ENCODE measurements at regions of chr17 and their contacts with region 1.

Region 1: GRCh38 chr17:40531051-40531991 is 29.9 kb upstream of the TNS4 start:
- DNase-seq: no peak
- ATAC-seq: no peak
- H3K4me3 ChIP-seq: no peak overlapping the region
- H3K27ac ChIP-seq: peak overlapping the region; percentile 21
- H3K4me1 ChIP-seq: peaks cover 37% of the 10 kb centered on the region
- H3K27me3 ChIP-seq: no peaks in the 10 kb centered on the region
- CTCF ChIP-seq: no peak
- POLR2A ChIP-seq: no peak
- RAD21 ChIP-seq: no peak

Region 2: DNA sequence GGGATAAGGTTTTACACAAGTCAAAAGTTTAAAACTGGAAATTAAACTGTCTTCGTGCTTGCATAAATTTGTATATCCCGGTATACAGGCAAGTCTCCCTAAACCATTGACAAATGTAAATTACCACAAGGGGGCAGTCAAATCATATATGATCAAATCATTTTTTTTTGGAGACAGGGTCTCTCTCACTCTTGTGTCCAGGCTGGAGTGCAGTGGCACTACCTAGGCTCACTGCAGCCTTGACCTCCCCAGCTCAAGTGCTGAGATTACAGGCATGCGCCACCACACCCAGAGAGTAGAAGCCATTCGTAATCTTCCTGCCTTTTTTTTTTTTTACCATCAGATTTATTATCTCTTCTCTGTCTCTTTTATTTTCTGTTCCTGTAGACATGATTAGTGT is 132.1 kb before region 1 on chr17:
- CTCF ChIA-PET with region 1: interaction called, 5 read pairs
- POLR2A ChIA-PET with region 1: no interaction called
- dilution Hi-C with region 1: no loop called
- in situ Hi-C with region 1: no loop called
- intact Hi-C with region 1: loop called (anchors 1 kb)
- DNase-seq: peak; percentile 74
- ATAC-seq: peak; percentile 75
- H3K4me3 ChIP-seq: no peak overlapping the region
- H3K27ac ChIP-seq: no peak overlapping the region
- H3K4me1 ChIP-seq: no peaks in the 10 kb centered on the region
- H3K27me3 ChIP-seq: no peaks in the 10 kb centered on the region
- CTCF ChIP-seq: peak; percentile 65
- POLR2A ChIP-seq: no peak
- RAD21 ChIP-seq: peak; percentile 59

Region 3: DNA sequence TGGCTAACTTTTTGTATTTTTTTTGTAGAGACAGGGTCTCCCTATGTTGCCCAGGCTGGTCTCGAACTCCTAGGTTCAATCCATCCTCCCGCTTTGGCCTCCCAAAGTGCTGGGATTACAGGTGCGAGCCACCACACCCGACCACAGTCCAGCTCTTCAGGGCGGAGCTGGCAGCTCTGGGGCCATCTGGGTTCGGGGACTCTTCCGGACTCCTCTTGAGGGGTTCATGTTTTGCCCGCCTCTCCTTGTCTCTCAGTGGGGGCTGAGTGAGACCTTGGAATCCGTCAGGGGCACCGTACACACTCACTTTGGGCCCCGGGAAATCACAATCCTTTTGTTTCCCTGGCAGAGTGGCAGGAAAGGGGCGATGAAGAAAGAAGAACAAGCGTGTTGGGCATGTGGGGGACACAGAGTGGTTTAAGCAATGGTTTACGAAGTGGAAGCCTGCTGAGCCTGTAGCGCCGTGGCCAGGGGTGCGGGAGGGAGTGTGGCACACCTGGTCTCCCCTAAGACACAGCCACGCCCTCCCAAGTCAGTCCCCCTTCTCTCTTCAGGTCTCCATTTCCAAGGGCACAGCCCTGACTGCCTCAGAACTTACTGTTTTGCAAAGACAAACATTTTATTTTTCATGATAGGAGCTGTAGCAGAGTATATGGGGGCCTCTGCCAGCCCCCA is 56.0 kb before region 1 on chr17:
- CTCF ChIA-PET with region 1: interaction called, 19 read pairs
- POLR2A ChIA-PET with region 1: interaction called, 3 read pairs
- dilution Hi-C with region 1: no loop called
- in situ Hi-C with region 1: no loop called
- intact Hi-C with region 1: loop called (anchors 2 kb)
- DNase-seq: no peak
- ATAC-seq: no peak
- H3K4me3 ChIP-seq: no peak overlapping the region
- H3K27ac ChIP-seq: peak overlapping the region; percentile 40
- H3K4me1 ChIP-seq: peaks cover 25% of the 10 kb centered on the region
- H3K27me3 ChIP-seq: no peaks in the 10 kb centered on the region
- CTCF ChIP-seq: no peak
- POLR2A ChIP-seq: no peak
- RAD21 ChIP-seq: no peak

Region 4: DNA sequence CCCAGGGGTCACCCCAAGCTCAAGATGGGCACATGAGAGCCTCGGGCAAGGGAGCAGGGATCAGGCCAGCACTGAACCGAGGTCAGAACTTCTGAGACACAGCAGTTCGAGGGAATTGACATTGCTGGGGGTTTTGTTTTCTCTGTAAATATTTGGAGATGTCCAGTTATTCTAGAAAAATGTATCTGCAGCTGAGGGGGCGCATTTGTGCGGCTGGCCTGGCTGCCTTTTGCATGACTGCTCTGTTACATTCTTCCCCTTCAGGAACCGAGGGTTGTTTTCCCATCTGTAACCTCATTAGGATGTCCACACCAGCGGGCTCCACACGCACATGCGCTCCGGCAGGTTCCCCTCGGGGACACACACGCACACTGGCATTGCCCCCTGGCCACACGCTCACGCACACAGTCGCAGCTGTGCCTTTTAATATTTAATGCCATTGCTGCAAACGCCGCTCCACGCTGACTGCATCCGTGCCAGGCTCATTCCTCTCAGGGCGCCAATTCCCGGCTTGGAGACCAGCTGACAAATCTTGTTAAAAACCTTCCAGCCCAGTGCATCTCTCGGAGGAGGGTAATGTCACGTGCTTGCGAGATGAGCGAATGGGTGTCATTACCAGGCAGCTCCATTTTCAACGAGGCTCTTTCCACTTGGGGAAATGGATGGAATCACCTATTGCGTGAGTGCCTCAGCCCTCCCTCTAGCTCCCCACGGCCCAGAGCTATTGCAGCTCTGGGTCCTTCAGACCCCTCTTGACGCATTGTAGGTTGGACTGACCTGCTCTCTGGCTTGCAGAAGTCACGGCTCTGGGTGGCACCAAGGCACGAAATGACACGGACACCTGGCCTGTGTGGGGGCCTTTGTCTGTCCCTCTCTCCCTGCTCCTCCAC is 20.8 kb after region 1 on chr17:
- CTCF ChIA-PET with region 1: interaction called, 19 read pairs
- POLR2A ChIA-PET with region 1: no interaction called
- dilution Hi-C with region 1: no loop called
- in situ Hi-C with region 1: no loop called
- intact Hi-C with region 1: no loop called
- DNase-seq: peak; percentile 99
- ATAC-seq: peak; percentile 59
- H3K4me3 ChIP-seq: no peak overlapping the region
- H3K27ac ChIP-seq: peak overlapping the region; percentile 93
- H3K4me1 ChIP-seq: peaks cover 60% of the 10 kb centered on the region
- H3K27me3 ChIP-seq: no peaks in the 10 kb centered on the region
- CTCF ChIP-seq: no peak
- POLR2A ChIP-seq: peak; percentile 53
- RAD21 ChIP-seq: 0 out of 2 replicates have a peak, but pooled peaks have one; percentile 2

Region 5: DNA sequence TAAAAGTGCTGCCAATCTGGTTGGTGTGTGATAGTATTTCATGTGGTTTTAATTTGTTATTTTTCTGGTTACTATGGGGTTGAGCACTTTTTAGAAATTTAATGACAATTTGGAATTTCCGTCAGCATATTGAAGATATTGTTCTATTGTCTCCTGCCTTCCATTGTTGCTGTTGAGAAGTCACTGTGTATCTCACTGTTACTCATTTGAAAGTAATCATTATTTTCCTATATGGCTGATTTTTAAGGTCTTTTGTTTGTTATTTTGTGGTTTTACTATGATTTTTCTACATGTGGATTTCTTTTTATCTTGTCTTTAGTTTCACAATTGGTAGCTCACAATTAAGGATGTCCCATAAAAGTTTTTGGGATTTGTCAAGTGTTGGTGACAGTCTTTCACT is 232.4 kb after region 1 on chr17:
- CTCF ChIA-PET with region 1: no interaction called
- POLR2A ChIA-PET with region 1: no interaction called
- dilution Hi-C with region 1: no loop called
- in situ Hi-C with region 1: no loop called
- intact Hi-C with region 1: no loop called
- DNase-seq: no peak
- ATAC-seq: no peak
- H3K4me3 ChIP-seq: no peak overlapping the region
- H3K27ac ChIP-seq: no peak overlapping the region
- H3K4me1 ChIP-seq: no peaks in the 10 kb centered on the region
- H3K27me3 ChIP-seq: peaks cover 7% of the 10 kb centered on the region
- CTCF ChIP-seq: no peak
- POLR2A ChIP-seq: no peak
- RAD21 ChIP-seq: no peak

Measured in IMR-90 (cell line).